ENCODE measurements at regions of chr2 and their contacts with region 1.

Region 1: GRCh38 chr2:216683846-216684507 is 11.4 kb downstream of the IGFBP5 start:
- DNase-seq: peak; percentile 48 to 93
- H3K4me3 ChIP-seq: no peak overlapping the region
- H3K27ac ChIP-seq: peak overlapping the region; percentile 87 to 93
- H3K4me1 ChIP-seq: peaks cover 19 to 90% of the 10 kb centered on the region in 2 donors
- H3K27me3 ChIP-seq: no peaks in the 10 kb centered on the region
- CTCF ChIP-seq: no peak

Region 2: GRCh38 chr2:216453955-216454614 is 229.9 kb before region 1 on chr2:
- intact Hi-C with region 1: no loop called
- DNase-seq: no peak
- H3K4me3 ChIP-seq: no peak overlapping the region
- H3K27ac ChIP-seq: no peak overlapping the region
- H3K4me1 ChIP-seq: no peaks in the 10 kb centered on the region
- H3K27me3 ChIP-seq: no peaks in the 10 kb centered on the region
- CTCF ChIP-seq: no peak

Region 3: GRCh38 chr2:217166241-217166850 is 482.4 kb after region 1 on chr2:
- intact Hi-C with region 1: loop called (anchors 5 kb)
- DNase-seq: no peak
- H3K4me3 ChIP-seq: no peak overlapping the region
- H3K27ac ChIP-seq: no peak overlapping the region
- H3K4me1 ChIP-seq: peaks cover 0 to 10% of the 10 kb centered on the region in 2 donors
- H3K27me3 ChIP-seq: no peaks in the 10 kb centered on the region
- CTCF ChIP-seq: peak; percentile 44 to 64 (median 53)

Region 4: DNA sequence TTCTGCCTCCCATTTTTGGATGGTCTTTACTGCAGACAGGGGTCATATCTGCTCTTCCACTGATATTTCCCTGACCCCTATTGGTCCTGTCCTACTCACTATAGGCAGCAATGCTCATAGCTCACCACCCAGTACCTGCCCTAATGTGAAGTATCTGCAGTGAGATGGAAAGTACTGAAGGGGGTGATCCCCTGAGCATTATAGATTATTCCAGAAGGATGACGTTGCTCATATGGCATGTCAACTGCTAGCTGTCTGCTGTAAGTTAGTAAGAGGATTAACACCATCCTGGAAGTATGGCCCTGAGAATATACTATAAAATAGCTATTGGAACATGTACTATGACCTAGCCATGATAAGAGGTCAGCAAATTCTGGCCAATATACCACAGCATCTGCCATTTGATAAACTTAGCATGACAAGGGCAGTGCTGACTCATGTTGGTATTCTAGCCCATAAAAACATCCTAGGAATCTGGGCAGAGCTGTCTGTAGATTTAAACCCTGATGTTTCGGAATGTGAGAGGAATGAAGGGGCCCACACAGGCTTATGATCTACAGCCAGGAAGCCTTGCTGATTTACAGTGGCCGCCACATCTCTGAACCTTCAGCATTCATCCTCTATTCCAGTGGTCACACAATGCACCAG is 867.4 kb after region 1 on chr2:
- intact Hi-C with region 1: no loop called
- DNase-seq: no peak
- H3K4me3 ChIP-seq: no peak overlapping the region
- H3K27ac ChIP-seq: no peak overlapping the region
- H3K4me1 ChIP-seq: peaks cover 0 to 3% of the 10 kb centered on the region in 2 donors
- H3K27me3 ChIP-seq: no peaks in the 10 kb centered on the region
- CTCF ChIP-seq: no peak

Region 5: DNA sequence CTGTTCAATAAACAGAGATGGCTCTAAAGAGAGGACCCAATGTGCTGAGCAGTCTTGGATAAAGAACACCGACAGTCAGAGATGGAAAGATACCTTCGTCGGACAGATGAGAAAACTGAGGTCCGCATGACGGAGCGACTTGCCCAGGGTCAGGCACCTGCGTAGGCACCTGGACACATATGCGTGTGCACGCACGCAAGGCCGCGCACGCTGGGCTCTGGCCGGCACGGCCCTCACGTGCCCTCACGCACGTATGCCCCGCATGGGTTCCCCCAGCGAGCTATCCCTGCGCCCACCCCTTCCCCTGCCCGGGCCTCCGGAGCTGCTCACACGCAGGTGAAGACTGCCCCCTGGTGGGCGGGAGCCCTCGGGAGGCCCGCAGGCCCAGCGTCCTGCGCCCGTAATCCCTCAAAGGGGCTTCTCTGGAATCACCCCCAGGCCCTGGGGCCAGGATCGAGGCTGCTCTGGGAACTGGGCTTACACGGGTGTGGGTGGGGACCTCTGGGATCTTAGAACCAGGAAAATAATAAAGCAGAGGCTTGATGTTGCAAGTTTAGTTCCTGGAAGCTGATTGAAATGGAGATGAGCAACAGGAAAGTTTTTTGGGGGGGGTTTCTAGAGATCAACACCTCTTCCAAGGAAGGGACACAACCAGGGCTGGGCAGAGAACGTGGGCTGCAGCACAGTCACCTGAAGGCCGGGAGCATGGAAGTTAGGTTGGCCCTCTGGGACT is 1072.6 kb after region 1 on chr2:
- intact Hi-C with region 1: loop called (anchors 2 kb)
- DNase-seq: peak in 1 of 2 donors; percentile 79
- H3K4me3 ChIP-seq: no peak overlapping the region
- H3K27ac ChIP-seq: peak overlapping the region; percentile 80 to 87
- H3K4me1 ChIP-seq: peaks cover 12 to 50% of the 10 kb centered on the region in 2 donors
- H3K27me3 ChIP-seq: no peaks in the 10 kb centered on the region
- CTCF ChIP-seq: peak; percentile 79 to 97 (median 85)